ENCODE measurements at regions of chr1 and their contacts with region 1.

Region 1: DNA sequence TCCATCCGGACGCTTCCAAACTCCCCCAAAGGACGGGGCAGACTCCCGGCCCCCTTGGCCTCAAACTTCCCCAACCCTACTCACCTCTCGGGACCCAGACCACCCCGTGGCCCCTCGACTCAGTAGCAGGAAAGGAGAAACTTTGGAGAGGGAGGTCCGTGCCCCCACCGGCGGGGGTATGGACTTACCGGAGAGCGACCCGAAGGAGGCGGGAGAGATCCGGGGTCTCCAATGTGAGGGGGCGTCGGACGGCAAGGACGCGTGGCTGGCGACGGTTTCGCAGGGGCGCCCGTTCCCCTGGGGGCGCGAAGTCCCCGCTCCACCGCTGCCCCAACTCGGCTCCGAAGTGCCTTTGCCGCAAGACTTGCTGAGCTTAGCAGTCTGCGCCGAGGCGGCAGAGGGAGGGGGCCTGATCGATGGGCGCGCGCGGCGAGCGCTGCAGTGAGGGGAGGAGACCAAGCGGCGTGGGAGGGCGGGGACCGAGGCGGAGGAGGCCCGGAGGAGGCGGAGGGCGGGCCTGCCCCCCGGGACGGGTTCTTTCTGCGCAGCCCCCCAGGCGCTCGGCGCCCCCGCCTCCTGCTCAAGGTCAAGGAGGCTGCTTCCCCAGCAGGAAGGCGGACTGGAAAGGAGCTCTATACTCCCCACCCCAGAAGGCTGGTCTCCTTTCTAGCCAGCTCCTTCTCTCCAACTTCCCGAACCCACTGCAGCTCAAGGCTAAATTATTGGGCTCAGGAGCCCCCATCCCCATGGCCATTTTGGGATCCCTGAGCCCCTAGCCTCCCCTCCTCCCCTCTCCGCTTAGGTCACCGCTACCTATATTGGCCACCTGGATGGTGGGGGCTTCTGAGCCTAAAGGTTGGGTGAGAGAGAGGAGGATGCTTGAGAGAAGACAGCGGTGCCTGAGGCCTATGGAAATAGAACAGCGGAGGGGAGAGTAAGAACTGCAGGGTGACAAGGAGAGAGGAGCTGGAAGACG is at the start of gene SYT2:
- DNase-seq: peak; percentile 82
- total RNA-seq, gene SYT2: not detected

Region 2: GRCh38 chr1:201859424-201859823 is 850.9 kb before region 1 on chr1:
- intact Hi-C with region 1: loop called in 1 of 2 experiments (anchors 5 kb)
- DNase-seq: no peak

Region 3: DNA sequence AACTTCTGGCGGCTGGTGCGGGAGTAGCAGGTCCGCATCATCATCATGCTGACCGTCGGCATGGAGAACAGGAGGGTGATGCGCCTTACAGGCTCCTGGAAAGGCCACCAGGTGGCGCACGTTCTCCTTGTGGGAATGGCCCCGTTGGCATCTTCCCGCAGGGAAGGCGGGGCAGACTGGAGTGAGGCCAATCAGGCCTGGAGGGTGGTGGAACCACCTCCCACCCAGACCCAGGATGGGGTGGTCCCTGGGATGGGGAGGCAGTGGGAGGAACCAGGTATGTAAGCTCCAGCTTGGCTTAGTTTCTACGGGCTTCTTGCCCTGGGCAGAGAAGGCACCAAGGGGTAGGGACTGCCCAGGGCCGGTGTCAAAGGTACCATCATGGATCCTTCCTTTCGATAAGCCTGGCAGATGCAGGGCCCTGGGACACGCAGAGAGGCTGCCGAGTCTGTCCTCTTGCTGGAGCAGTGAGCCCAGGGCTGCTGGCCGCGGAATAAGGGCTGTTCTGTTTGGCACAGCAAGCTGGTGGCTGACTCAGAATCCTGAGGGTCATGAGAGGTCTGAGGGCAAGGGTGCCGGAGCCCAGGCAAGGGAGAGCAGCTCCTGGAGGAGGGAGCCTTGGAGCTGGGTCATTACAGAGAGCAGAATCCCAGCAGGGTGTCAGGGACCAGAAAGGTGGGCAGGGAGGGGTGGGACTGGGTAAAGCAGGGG is 525.5 kb before region 1 on chr1:
- intact Hi-C with region 1: loop called (anchors 5 to 10 kb)
- DNase-seq: peak; percentile 93

Region 4: GRCh38 chr1:202329891-202330290 is 380.5 kb before region 1 on chr1:
- intact Hi-C with region 1: loop called in 1 of 2 experiments (anchors 10 kb)
- DNase-seq: no peak

Region 5: DNA sequence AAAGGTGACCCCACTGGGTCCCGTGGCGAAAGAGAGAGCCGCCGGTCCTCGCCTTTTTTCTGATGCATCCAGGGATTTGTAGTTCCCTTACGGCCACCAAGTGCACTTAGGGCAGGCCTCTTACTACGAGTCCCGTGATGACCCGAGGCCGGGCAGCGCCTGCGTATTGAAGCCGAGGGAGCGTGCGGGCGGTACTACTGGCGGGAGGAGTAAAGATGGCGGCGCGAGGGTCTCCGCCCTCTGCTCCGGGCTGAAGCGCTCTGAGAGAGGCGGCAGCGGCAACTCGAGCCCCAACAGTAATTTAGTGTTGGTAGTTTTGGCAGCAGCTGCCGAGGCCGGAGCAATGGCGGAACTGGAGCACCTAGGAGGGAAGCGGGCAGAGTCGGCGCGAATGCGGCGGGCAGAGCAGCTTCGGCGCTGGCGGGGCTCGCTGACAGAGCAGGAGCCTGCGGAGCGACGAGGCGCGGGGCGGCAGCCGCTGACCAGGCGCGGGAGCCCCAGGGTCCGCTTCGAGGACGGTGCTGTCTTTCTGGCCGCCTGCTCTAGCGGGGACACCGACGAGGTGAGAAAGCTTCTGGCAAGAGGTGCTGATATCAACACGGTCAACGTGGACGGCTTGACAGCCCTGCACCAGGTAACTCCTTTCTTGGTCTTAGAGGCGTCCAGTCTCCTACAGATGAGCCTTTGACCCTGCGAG is 361.7 kb before region 1 on chr1 and contains the start of gene PPP1R12B:
- intact Hi-C with region 1: loop called in 1 of 2 experiments (anchors 10 kb)
- DNase-seq: peak; percentile 99
- total RNA-seq, gene PPP1R12B: 545 to 634 TPM

Region 6: GRCh38 chr1:204072931-204073836 is 1362.8 kb after region 1 on chr1 and contains the start of gene SOX13:
- intact Hi-C with region 1: no loop called
- DNase-seq: peak; percentile 96
- total RNA-seq, gene SOX13: 43.6 to 47.0 TPM

Measured in posterior vena cava (tissue), 2 donors.